CD8-positive, alpha-beta memory T cell (primary cell): ENCODE measurements at regions of chr19 and their contacts with region 1.

Region 1: DNA sequence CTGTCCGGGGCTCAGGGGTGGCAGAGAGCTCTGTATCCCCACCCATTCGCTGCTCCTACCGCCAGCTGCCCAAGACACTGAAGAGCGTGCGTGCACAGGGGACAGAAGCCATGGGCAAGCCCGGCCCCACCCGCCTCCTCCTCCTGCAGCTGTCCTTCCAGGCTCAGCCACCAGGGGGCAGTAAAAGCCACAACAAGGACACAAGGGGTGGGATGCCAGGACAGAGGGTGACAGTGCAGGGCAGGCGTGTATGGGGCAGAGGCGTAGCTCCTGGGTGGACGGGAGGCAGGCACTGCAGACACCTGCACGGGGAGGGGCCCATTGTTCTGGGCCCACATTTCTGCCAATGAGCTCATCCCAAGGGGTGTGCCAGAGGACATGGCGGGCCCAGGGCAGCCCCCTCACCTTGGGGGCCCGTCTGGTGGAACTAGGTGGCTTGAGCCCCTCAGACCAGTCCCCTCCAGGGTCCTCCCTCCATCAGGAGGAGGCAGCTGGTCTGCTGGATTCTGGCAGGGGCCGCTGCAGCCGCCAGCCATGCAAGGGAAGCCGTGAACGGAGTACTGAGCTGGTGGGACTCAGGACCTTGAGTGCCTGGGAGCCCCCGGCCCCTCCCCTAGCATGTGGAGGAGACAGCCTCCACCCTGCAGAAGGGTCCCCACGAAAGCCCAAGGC is 61.1 kb downstream of the MLLT1 start:
- DNase-seq: peak; percentile 63 to 86 (median 75)
- H3K4me3 ChIP-seq: no peak overlapping the region
- H3K4me3 Mint-ChIP-seq: no peak overlapping the region
- H3K27ac ChIP-seq: no peak overlapping the region
- H3K27ac Mint-ChIP-seq: peak overlapping the region in 2 of 8 donors; percentile 66 to 68
- H3K4me1 ChIP-seq: no peaks in the 10 kb centered on the region
- H3K4me1 Mint-ChIP-seq: peaks cover 2 to 5% (median 4%) of the 10 kb centered on the region in 3 donors
- H3K27me3 ChIP-seq: no peaks in the 10 kb centered on the region
- H3K27me3 Mint-ChIP-seq: no peaks in the 10 kb centered on the region

Region 2: GRCh38 chr19:6232567-6232966 is 13.9 kb after region 1 on chr19:
- CTCF ChIA-PET with region 1: interaction called, 12 read pairs
- POLR2A ChIA-PET with region 1: no interaction called
- DNase-seq: no peak
- H3K4me3 ChIP-seq: no peak overlapping the region
- H3K4me3 Mint-ChIP-seq: no peak overlapping the region
- H3K27ac ChIP-seq: no peak overlapping the region
- H3K27ac Mint-ChIP-seq: peak overlapping the region in 1 of 8 donors; percentile 66
- H3K4me1 ChIP-seq: no peaks in the 10 kb centered on the region
- H3K4me1 Mint-ChIP-seq: peaks cover 22 to 43% (median 31%) of the 10 kb centered on the region in 3 donors
- H3K27me3 ChIP-seq: no peaks in the 10 kb centered on the region
- H3K27me3 Mint-ChIP-seq: no peaks in the 10 kb centered on the region

Region 3: DNA sequence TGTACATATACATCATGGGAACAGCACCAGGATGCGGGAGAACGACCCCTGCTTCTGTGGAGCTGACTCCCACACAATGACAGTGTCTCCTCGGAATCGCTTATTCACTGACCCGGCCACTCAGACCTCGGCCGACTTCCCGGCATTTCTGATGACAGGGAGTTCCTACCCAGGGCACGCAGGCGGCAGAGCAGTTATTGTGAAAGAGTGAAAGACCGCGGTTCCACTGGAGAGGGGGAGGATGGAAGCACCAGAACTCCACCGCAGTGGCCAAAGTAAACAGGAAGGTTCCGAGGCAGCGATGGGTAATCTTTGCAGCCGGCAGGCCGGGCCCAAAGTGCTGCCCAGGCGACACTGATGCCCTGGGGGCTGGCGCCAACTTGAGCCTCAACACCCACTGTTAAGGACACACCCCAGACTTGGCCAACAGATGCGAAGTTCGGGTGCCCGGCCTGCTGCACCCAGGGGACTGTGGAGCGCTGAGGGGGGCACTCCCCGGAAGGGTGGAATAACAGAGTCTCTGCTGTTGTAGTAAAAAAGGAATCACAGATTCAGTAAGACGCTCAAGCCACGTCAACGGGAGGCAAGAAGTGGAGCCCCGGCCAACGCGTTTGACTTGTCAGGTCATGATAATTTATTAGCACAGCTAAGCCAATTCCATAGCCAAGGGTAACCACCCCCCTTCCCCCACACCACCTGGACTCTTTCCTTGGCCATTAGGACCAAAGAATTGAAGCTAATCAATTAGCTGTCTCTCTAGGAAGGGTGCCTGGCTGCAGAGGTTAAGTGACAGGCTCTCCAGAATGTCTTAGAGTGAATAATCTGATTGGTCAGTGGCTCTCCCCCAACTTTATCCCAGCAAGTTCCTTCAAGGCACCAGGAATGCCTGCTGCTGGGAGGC is 55.3 kb after region 1 on chr19:
- CTCF ChIA-PET with region 1: no interaction called
- POLR2A ChIA-PET with region 1: no interaction called
- DNase-seq: no peak
- H3K4me3 ChIP-seq: no peak overlapping the region
- H3K4me3 Mint-ChIP-seq: no peak overlapping the region
- H3K27ac ChIP-seq: no peak overlapping the region
- H3K27ac Mint-ChIP-seq: peak overlapping the region in 4 of 8 donors; percentile 6 to 77 (median 47)
- H3K4me1 ChIP-seq: peaks cover 6% of the 10 kb centered on the region
- H3K4me1 Mint-ChIP-seq: peaks cover 50 to 72% (median 55%) of the 10 kb centered on the region in 3 donors
- H3K27me3 ChIP-seq: no peaks in the 10 kb centered on the region
- H3K27me3 Mint-ChIP-seq: no peaks in the 10 kb centered on the region

Region 4: DNA sequence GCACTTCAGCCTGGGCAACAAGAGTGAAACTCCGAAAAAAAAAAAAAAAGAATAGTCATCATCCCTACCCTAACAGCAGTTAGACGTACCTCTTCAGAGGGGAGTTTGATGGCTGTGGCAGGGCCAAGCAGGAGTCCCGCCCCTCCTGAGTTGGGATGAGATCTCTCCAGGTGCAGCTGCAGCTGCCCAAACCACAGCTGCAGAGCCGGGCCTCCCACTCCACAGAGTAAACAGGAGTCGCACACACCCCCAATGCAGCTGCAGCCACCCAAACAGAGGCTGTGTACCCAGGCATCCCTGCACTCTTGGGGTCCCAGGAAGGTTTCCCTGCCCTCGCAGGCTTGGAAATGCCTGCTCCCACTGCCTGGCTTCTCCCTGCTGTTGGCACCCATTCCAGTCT is 78.6 kb after region 1 on chr19:
- CTCF ChIA-PET with region 1: interaction called, 12 read pairs
- POLR2A ChIA-PET with region 1: interaction called, 3 read pairs
- DNase-seq: no peak
- H3K4me3 ChIP-seq: no peak overlapping the region
- H3K4me3 Mint-ChIP-seq: no peak overlapping the region
- H3K27ac ChIP-seq: no peak overlapping the region
- H3K27ac Mint-ChIP-seq: no peak overlapping the region
- H3K4me1 ChIP-seq: no peaks in the 10 kb centered on the region
- H3K4me1 Mint-ChIP-seq: peaks cover 0 to 3% (median 1%) of the 10 kb centered on the region in 3 donors
- H3K27me3 ChIP-seq: no peaks in the 10 kb centered on the region
- H3K27me3 Mint-ChIP-seq: peaks cover 3 to 6% of the 10 kb centered on the region in 2 donors